HepG2 (cell line): ENCODE measurements at regions of chr4 and their contacts with region 1.

Region 1: GRCh38 chr4:3106339-3107186 is 32.1 kb downstream of the HTT start:
- DNase-seq: peak; percentile 67
- ATAC-seq: peak; percentile 100
- H3K4me3 ChIP-seq: no peak overlapping the region
- H3K27ac ChIP-seq: no peak overlapping the region
- H3K4me1 ChIP-seq: no peaks in the 10 kb centered on the region
- H3K27me3 ChIP-seq: no peaks in the 10 kb centered on the region
- CTCF ChIP-seq: peak; percentile 96
- EP300 ChIP-seq: no peak
- POLR2A ChIP-seq: no peak
- RAD21 ChIP-seq: peak; percentile 81

Region 2: GRCh38 chr4:3136453-3136852 is 29.9 kb after region 1 on chr4:
- CTCF ChIA-PET with region 1: interaction called, 9 read pairs
- POLR2A ChIA-PET with region 1: no interaction called
- in situ Hi-C with region 1: no loop called
- intact Hi-C with region 1: loop called (anchors 2 kb)
- DNase-seq: no peak
- ATAC-seq: no peak
- H3K4me3 ChIP-seq: no peak overlapping the region
- H3K27ac ChIP-seq: no peak overlapping the region
- H3K4me1 ChIP-seq: peaks cover 14% of the 10 kb centered on the region
- H3K27me3 ChIP-seq: no peaks in the 10 kb centered on the region
- CTCF ChIP-seq: no peak
- EP300 ChIP-seq: no peak
- POLR2A ChIP-seq: no peak
- RAD21 ChIP-seq: no peak

Region 3: DNA sequence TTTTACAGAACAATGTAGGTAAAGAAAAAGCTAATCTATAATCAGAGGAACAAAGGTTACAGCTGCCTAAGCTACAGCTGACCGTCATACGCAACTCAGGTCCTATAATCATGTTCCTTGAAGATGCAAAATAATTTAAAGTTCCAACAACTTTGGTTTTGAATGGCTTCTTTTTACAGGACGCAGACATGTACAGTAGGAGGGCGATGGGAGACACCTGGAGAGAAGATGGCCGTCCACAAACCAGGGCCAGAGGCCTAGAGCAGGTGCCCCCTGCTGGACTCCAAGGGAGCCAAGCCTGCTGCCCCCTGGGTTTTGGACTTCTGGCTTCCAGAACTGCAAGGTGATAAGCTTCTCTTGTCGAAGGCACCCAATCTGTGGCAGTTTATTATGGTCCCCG is 345.8 kb after region 1 on chr4:
- CTCF ChIA-PET with region 1: no interaction called
- POLR2A ChIA-PET with region 1: no interaction called
- in situ Hi-C with region 1: no loop called
- intact Hi-C with region 1: loop called (anchors 1 kb)
- DNase-seq: peak; percentile 74
- ATAC-seq: peak; percentile 94
- H3K4me3 ChIP-seq: peak overlapping the region; percentile 7 to 34 (median 30); a peak in 3 of 6 replicates
- H3K27ac ChIP-seq: no peak overlapping the region
- H3K4me1 ChIP-seq: peaks cover 27% of the 10 kb centered on the region
- H3K27me3 ChIP-seq: peaks cover 0 to 2% of the 10 kb centered on the region in 2 experiments; a peak in 1 of 5 replicates
- CTCF ChIP-seq: peak; percentile 84
- EP300 ChIP-seq: no peak
- POLR2A ChIP-seq: no peak
- RAD21 ChIP-seq: peak; percentile 59

Region 4: DNA sequence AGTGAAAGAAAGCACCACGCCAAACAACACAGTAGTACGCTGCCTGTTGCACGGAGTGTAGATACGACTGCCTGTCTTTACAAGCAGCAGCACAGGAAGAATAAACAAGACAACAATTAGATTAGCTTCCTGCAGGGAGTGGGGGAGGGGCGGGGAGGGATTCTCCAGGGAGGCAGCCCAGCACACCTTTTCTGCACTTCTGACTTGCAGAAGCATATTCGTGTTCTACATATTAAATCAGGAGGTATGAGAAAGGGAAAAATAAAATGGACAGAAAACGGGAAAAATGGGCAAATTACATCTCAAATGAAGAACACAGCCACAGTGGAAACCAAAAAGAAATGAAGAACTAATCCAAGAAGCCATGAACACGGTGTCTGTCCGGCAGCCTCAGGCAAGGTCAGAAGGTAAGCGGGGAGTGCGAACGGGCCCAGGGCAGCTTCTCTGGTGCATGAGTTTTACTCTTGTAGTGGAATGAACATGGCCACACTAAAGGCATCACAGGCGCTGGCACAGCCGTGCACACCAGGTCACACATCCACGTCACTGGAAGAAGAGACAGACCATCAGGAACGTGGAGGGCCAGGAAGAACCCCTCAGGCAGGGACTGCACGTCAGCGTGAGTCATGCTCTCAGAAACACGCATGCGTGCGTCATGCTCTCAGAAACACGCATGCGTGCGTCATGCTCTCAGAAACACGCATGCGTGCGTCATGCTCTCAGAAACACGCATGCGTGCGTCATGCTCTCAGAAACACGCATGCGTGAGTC is 639.5 kb after region 1 on chr4:
- CTCF ChIA-PET with region 1: no interaction called
- POLR2A ChIA-PET with region 1: no interaction called
- in situ Hi-C with region 1: no loop called
- intact Hi-C with region 1: no loop called
- DNase-seq: no peak
- ATAC-seq: no peak
- H3K4me3 ChIP-seq: no peak overlapping the region
- H3K27ac ChIP-seq: no peak overlapping the region
- H3K4me1 ChIP-seq: no peaks in the 10 kb centered on the region
- H3K27me3 ChIP-seq: peaks cover 8 to 71% of the 10 kb centered on the region in 2 experiments
- CTCF ChIP-seq: no peak
- EP300 ChIP-seq: no peak
- POLR2A ChIP-seq: no peak
- RAD21 ChIP-seq: no peak